ENCODE measurements at regions of chr12 and their contacts with region 1.

Region 1: DNA sequence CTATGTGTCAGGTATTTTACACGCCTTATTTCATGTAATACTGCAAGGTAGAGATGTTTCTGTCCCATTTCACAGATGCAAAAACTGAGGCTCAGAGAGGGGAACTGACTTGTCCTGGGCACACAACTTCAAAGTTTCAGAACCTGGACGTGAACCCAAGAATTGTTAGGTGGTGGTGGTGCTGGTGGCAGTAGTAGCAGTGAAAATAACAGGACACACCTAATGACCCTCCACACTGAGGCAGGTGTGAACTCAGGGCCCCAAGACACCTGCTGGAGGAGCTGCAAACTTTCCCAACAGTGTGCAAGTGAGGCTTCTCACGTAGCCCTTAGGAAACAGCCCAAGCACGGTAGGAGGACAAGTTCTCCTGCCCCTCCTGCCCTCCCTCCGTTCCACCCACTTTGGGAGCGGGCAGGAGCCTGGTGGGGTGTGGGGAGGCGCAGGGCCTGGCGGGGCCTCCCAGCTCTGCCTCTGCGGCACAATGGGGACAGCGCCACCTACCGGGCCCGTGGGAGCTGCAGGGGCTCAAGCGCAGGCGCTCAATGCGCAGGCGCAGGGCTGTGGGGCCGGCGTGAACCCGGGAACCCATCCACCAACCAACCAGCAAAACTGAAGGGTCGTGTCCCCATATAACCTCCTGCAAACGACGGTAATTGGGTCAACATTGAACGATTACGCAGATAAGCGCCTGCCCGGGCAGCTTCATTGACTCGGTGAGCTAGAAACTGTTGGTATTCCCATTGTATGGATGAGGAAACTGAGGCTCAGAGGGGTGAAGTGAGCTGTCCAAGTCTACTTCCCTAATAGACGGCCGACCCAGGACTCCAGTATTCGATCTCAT is 12.0 kb upstream of the TRPV4 start:
- DNase-seq: peak; percentile 96
- H3K4me3 ChIP-seq: peak overlapping the region; percentile 35 to 36; a peak in 3 of 4 replicates
- H3K27ac ChIP-seq: no peak overlapping the region
- H3K4me1 ChIP-seq: peaks cover 0 to 3% of the 10 kb centered on the region in 2 experiments; a peak in 1 of 4 replicates
- H3K27me3 ChIP-seq: no peaks in the 10 kb centered on the region
- CTCF ChIP-seq: peak; percentile 98
- EP300 ChIP-seq: no peak
- RAD21 ChIP-seq: peak; percentile 86

Region 2: GRCh38 chr12:109518820-109519665 is 326.2 kb before region 1 on chr12:
- CTCF ChIA-PET with region 1: interaction called, 35 read pairs
- POLR2A ChIA-PET with region 1: no interaction called
- DNase-seq: peak; percentile 81
- H3K4me3 ChIP-seq: peak overlapping the region in 1 of 2 experiments; percentile 26; a peak in 1 of 4 replicates
- H3K27ac ChIP-seq: peak overlapping the region; percentile 57 to 89
- H3K4me1 ChIP-seq: peaks cover 14 to 52% of the 10 kb centered on the region in 2 experiments; a peak in 3 of 4 replicates
- H3K27me3 ChIP-seq: no peaks in the 10 kb centered on the region
- CTCF ChIP-seq: peak; percentile 93
- EP300 ChIP-seq: no peak
- RAD21 ChIP-seq: peak; percentile 96

Region 3: DNA sequence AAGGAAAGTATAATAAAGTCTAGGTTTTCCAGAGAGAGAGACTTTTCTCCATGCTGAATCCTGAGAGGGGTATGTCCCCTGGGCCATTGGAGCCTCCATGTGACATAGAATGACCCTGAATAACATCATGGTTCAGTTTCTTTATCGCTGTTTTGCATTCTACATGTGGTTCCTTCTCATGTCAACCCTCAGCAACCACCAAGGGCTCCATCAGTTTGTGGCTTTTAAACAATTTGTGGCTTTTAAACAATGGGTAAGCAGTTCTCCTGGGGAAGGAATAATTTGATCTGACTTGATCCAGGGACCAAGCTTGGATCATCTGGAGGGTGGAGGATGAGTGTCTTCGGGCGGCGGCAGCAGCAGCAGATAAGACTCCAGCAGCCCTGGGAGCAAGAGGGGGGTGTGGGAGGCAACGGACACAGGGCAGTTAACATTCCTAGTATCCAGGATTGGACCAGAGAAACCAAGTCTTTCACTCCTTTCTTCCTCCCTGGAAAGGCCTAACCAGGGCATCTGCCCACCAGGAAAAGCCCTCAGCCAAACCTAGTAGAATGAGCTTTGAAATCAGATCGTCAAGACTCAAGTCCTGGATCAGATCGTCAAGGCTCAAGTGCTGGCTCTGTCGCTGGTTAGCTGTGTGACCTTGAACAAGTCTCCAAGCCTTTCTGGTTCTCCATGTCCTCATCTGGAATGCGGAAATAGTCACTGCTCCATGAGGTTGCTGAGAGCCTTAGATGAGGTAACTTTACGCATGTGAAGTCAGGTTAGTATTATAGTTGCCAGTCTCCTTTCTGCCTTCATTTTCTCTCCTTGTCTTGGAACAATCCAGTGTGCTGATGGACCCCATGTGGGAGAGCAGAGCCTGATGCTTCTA is 159.4 kb before region 1 on chr12:
- CTCF ChIA-PET with region 1: no interaction called
- POLR2A ChIA-PET with region 1: no interaction called
- DNase-seq: no peak
- H3K4me3 ChIP-seq: no peak overlapping the region
- H3K27ac ChIP-seq: no peak overlapping the region
- H3K4me1 ChIP-seq: no peaks in the 10 kb centered on the region
- H3K27me3 ChIP-seq: no peaks in the 10 kb centered on the region
- CTCF ChIP-seq: no peak
- EP300 ChIP-seq: no peak
- RAD21 ChIP-seq: no peak

Region 4: DNA sequence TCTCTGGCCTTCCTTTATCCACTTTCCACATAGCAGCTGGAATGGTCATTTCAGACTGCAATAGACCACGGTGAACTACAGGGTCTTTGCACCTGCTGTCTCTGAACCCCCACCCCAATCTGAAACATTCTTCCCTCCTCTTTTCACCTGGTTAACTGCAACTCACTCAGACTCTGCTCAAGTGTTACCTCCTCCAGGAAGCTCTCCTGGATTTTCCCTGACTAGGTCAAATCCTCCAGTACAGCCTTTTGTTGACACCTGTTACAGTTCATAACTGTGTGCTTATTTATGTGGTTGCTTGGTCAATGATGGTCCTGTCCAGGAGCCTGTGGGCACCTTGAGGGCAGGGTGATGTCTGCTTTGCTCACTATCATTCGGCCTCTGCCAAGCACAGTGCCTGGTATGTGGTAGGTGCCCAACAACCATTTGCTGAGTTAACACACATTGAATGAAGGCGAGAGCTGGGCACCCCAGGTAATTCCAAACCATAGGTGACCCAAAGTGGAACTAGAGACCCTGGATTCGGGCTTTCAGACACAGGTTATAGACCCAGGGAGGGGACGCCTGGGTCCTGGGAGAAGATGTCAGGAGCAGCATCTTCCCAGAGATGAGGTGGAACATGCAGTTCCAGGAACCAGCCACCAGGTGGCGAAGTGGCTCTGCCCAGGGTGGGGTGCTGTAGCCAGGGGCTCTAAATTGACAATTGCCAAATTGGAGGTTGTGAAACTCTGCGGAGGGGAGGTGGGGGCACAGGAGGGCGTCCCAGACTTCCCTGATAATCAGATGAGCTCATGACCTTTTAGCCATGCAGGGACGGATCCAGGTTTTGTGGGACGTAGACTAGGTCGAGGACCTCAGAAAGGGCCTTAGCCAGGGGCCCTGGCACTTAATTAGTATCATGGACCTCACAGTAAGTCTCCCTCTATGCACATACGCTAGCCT is 40.1 kb before region 1 on chr12:
- CTCF ChIA-PET with region 1: interaction called, 89 read pairs
- POLR2A ChIA-PET with region 1: interaction called, 3 read pairs
- DNase-seq: peak; percentile 89
- H3K4me3 ChIP-seq: no peak overlapping the region; a peak in 1 of 4 replicates
- H3K27ac ChIP-seq: no peak overlapping the region
- H3K4me1 ChIP-seq: no peaks in the 10 kb centered on the region
- H3K27me3 ChIP-seq: no peaks in the 10 kb centered on the region
- CTCF ChIP-seq: peak; percentile 93
- EP300 ChIP-seq: no peak
- RAD21 ChIP-seq: peak; percentile 77

Region 5: DNA sequence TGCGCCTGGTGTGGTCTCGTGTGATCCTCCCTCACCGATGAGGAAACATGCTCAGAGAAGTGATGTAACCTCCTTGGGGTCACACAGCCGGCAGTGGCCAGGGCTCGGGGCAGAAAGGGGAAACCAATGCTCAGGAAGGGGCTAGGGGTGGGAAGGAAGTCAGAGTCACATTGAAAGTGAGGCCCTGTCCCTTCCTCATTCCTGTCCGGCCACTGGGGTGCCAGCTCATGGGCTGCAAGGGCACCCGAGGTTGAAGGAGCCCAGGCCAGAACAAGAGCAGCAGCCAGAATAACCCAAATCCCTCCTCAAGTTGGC is 17.0 kb before region 1 on chr12:
- CTCF ChIA-PET with region 1: interaction called, 57 read pairs
- POLR2A ChIA-PET with region 1: no interaction called
- DNase-seq: no peak
- H3K4me3 ChIP-seq: no peak overlapping the region
- H3K27ac ChIP-seq: no peak overlapping the region
- H3K4me1 ChIP-seq: no peaks in the 10 kb centered on the region; a peak in 1 of 4 replicates
- H3K27me3 ChIP-seq: no peaks in the 10 kb centered on the region
- CTCF ChIP-seq: no peak
- EP300 ChIP-seq: no peak
- RAD21 ChIP-seq: no peak

Region 6: DNA sequence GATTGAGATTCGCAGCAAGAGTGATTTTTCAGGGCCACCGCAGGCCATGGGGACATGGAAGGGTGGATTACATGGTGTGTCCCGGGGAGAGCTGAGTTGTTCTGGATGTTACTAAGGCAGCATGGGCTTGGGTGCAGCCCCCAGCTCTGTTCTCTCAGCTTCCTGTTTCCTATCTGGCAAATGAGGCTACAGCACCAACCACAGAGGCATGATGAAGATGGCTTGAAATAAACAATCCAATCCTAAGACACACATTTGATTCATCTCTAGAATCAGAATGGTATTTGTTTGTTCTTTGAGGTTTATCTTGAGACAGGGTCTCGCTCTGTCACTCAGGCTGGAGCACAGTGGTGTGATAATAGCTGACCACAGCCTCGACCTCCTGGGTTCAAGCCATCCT is 13.6 kb after region 1 on chr12:
- CTCF ChIA-PET with region 1: interaction called, 30 read pairs
- POLR2A ChIA-PET with region 1: interaction called, 3 read pairs
- DNase-seq: no peak
- H3K4me3 ChIP-seq: no peak overlapping the region
- H3K27ac ChIP-seq: no peak overlapping the region
- H3K4me1 ChIP-seq: no peaks in the 10 kb centered on the region
- H3K27me3 ChIP-seq: no peaks in the 10 kb centered on the region
- CTCF ChIP-seq: no peak
- EP300 ChIP-seq: no peak
- RAD21 ChIP-seq: no peak

Region 7: GRCh38 chr12:110223777-110224378 is 378.7 kb after region 1 on chr12:
- CTCF ChIA-PET with region 1: no interaction called
- POLR2A ChIA-PET with region 1: no interaction called
- DNase-seq: no peak
- H3K4me3 ChIP-seq: no peak overlapping the region
- H3K27ac ChIP-seq: peak overlapping the region; percentile 24 to 75; a peak in 3 of 4 replicates
- H3K4me1 ChIP-seq: peaks cover 6 to 13% of the 10 kb centered on the region in 2 experiments
- H3K27me3 ChIP-seq: no peaks in the 10 kb centered on the region
- CTCF ChIP-seq: no peak
- EP300 ChIP-seq: no peak
- RAD21 ChIP-seq: no peak

Measured in SK-N-SH (cell line).